ENCODE measurements at regions of chr1 and their contacts with region 1.

Region 1: DNA sequence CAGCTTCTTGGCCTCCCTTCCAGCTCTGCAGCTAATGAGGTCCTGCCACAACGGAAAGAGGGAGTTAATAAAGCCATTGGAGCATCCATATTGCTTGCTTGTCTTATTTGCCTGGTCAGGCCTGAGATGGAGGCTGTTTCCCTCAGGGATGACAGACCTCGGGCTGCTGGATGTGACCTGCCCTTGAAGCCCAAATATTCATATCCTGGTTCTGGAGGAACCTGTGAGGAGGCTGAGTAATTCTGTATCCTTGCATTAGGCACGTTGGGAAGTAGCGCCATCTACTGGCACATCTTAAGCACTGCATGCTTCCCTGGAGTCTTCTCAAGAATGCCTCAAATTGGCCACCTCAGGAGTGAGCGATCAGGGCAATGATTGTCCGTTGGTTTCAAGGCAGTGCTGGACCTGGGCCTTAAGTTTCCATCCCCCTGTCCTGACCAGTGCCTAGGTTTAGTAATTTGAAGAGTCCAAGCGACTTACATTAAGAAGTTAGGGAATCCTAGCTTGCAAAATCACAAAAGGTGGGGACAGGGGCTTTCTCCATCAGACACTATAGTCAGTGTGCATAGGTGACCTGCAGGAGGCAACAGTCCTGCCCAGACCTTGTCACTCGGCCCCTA is 13.8 kb upstream of the NASP start:
- DNase-seq: peak; percentile 47 to 95 (median 77)

Region 2: GRCh38 chr1:45359882-45360513 is 210.1 kb before region 1 on chr1:
- intact Hi-C with region 1: loop called (anchors 5 kb)
- DNase-seq: peak in 8 of 10 donors; percentile 51 to 94 (median 72)

Region 3: GRCh38 chr1:45512641-45513054 is 57.4 kb before region 1 on chr1:
- intact Hi-C with region 1: loop called (anchors 5 kb)
- DNase-seq: peak in 6 of 10 donors; percentile 47 to 89 (median 57)